ENCODE measurements at regions of chr1 and their contacts with region 1.

Region 1: GRCh38 chr1:201877877-201878401 is 10.8 kb upstream of the SHISA4 start:
- DNase-seq: peak; percentile 64
- H3K4me3 ChIP-seq: no peak overlapping the region
- H3K27ac ChIP-seq: no peak overlapping the region
- H3K4me1 ChIP-seq: no peaks in the 10 kb centered on the region
- H3K27me3 ChIP-seq: no peaks in the 10 kb centered on the region
- CTCF ChIP-seq: peak; percentile 53 to 67
- POLR2A ChIP-seq: no peak

Region 2: DNA sequence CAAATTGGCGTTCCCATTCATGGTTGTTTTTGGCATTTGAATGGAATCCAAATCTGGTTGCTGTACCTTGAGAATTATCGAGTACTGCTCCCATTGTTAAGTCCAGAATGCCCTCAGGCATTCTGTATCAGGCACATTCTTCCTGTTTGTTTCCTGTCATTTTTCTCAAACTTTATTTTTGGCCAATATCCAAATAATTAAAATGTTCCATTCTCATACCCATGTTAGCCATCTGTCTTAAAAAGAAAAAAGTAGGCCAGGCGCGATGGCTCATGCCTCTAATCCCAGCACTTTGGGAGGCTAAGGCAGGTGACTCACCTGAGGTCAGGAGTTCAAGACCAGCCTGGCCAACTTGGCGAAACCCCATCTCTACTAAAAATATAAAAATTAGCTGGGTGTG is 18.5 kb before region 1 on chr1:
- CTCF ChIA-PET with region 1: interaction called, 13 read pairs
- POLR2A ChIA-PET with region 1: no interaction called
- dilution Hi-C with region 1: no loop called
- intact Hi-C with region 1: no loop called
- DNase-seq: peak; percentile 89
- H3K4me3 ChIP-seq: no peak overlapping the region
- H3K27ac ChIP-seq: peak overlapping the region; percentile 26
- H3K4me1 ChIP-seq: peaks cover 24% of the 10 kb centered on the region
- H3K27me3 ChIP-seq: no peaks in the 10 kb centered on the region
- CTCF ChIP-seq: no peak
- POLR2A ChIP-seq: no peak

Region 3: GRCh38 chr1:201888282-201889089 is 10.5 kb after region 1 on chr1 and contains the start of gene SHISA4:
- CTCF ChIA-PET with region 1: interaction called, 21 read pairs
- POLR2A ChIA-PET with region 1: no interaction called
- dilution Hi-C with region 1: no loop called
- intact Hi-C with region 1: no loop called
- DNase-seq: peak; percentile 81
- H3K4me3 ChIP-seq: peak within 1 kb of the TSS; percentile 49 to 54 (median 53)
- H3K27ac ChIP-seq: no peak within 1 kb of the TSS
- H3K4me1 ChIP-seq: peaks cover 9% of the 10 kb centered on the region
- H3K27me3 ChIP-seq: no peaks in the 10 kb centered on the region
- CTCF ChIP-seq: no peak
- POLR2A ChIP-seq: no peak
- total RNA-seq, gene SHISA4: 21.2 and 25.6 TPM in 2 replicates

Measured in endothelial cell of umbilical vein (primary cell).